B cell (primary cell): ENCODE measurements at regions of chr3 and their contacts with region 1.

Region 1: GRCh38 chr3:145518639-145519038 is 642.3 kb downstream of the PLOD2 start:
- DNase-seq: no peak
- ATAC-seq: no peak
- H3K4me3 ChIP-seq: no peak overlapping the region
- H3K4me3 Mint-ChIP-seq: no peak overlapping the region
- H3K27ac ChIP-seq: no peak overlapping the region
- H3K27ac Mint-ChIP-seq: no peak overlapping the region
- H3K4me1 ChIP-seq: no peaks in the 10 kb centered on the region
- H3K4me1 Mint-ChIP-seq: no peaks in the 10 kb centered on the region
- H3K27me3 ChIP-seq: no peaks in the 10 kb centered on the region
- H3K27me3 Mint-ChIP-seq: no peaks in the 10 kb centered on the region
- CTCF ChIP-seq: no peak

Region 2: DNA sequence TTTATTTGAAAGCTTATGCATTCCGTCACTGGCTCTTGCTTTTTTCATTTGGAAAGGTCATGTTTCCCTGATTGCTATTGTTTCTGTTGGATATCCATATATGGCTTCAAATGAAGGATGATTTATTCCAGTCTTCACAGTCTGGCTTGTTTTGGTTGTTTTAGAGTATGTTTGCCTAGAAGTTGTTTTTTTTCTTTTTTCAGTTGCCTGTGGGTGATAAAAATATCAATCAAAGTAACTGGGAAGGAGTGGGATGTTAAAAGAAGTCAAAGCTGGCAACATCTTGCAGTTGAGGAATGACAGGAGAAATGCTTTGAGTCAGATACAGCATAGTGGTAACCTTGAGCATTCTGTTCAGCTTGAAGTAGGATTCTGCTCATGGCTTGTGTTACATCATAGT is 31.9 kb after region 1 on chr3:
- CTCF ChIA-PET with region 1: no interaction called
- POLR2A ChIA-PET with region 1: interaction called, 12 read pairs
- intact Hi-C with region 1: no loop called
- DNase-seq: no peak
- ATAC-seq: no peak
- H3K4me3 ChIP-seq: no peak overlapping the region
- H3K4me3 Mint-ChIP-seq: no peak overlapping the region
- H3K27ac ChIP-seq: no peak overlapping the region
- H3K27ac Mint-ChIP-seq: no peak overlapping the region
- H3K4me1 ChIP-seq: no peaks in the 10 kb centered on the region
- H3K4me1 Mint-ChIP-seq: no peaks in the 10 kb centered on the region
- H3K27me3 ChIP-seq: no peaks in the 10 kb centered on the region
- H3K27me3 Mint-ChIP-seq: no peaks in the 10 kb centered on the region
- CTCF ChIP-seq: no peak

Region 3: DNA sequence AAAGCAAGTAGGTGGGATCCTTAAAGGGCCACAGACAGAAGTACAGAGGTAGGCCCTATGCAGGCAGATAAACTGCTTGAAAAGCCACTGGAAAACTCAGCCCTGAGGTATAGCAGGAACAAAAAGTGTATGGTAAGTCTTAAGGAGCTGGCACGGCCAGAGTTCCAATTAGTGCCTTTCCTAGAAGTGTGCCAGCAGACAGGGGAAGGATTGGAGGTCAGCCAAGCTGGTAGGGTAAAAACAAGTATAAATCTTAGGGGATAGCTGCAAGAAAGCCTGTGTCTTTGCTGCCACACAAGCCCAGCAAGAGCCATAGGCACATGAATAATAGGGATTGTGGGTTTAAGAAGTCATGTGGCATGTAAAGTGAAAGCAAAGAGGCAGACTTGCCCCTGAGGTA is 59.8 kb after region 1 on chr3:
- CTCF ChIA-PET with region 1: no interaction called
- POLR2A ChIA-PET with region 1: no interaction called
- intact Hi-C with region 1: no loop called
- DNase-seq: no peak
- ATAC-seq: no peak
- H3K4me3 ChIP-seq: no peak overlapping the region
- H3K4me3 Mint-ChIP-seq: no peak overlapping the region
- H3K27ac ChIP-seq: no peak overlapping the region
- H3K27ac Mint-ChIP-seq: no peak overlapping the region
- H3K4me1 ChIP-seq: no peaks in the 10 kb centered on the region
- H3K4me1 Mint-ChIP-seq: no peaks in the 10 kb centered on the region
- H3K27me3 ChIP-seq: no peaks in the 10 kb centered on the region
- H3K27me3 Mint-ChIP-seq: no peaks in the 10 kb centered on the region
- CTCF ChIP-seq: no peak